ENCODE measurements at regions of chr17 and their contacts with region 1.

Region 1: DNA sequence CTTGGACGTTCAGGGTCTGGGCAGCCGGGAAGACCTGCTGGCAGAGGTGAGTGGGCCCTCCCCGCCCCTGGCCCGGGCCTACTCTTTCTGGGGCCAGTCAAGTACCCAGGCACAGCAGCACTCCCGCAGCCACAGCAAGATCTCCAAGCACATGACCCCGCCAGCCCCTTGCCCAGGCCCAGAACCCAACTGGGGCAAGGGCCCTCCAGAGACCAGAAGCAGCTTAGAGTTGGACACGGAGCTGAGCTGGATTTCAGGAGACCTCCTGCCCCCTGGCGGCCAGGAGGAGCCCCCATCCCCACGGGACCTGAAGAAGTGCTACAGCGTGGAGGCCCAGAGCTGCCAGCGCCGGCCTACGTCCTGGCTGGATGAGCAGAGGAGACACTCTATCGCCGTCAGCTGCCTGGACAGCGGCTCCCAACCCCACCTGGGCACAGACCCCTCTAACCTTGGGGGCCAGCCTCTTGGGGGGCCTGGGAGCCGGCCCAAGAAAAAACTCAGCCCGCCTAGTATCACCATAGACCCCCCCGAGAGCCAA is 8.6 kb upstream of the ABCC3 start:
- DNase-seq: peak; percentile 49 to 61 (median 53)
- H3K4me3 ChIP-seq: no peak overlapping the region
- H3K4me3 Mint-ChIP-seq: no peak overlapping the region
- H3K27ac ChIP-seq: no peak overlapping the region
- H3K27ac Mint-ChIP-seq: no peak overlapping the region
- H3K4me1 ChIP-seq: peaks cover 4% of the 10 kb centered on the region
- H3K4me1 Mint-ChIP-seq: peaks cover 0 to 4% (median under 1%) of the 10 kb centered on the region in 4 donors
- H3K27me3 ChIP-seq: peaks cover 14% of the 10 kb centered on the region
- H3K27me3 Mint-ChIP-seq: peaks cover 21 to 38% of the 10 kb centered on the region in 2 donors

Region 2: DNA sequence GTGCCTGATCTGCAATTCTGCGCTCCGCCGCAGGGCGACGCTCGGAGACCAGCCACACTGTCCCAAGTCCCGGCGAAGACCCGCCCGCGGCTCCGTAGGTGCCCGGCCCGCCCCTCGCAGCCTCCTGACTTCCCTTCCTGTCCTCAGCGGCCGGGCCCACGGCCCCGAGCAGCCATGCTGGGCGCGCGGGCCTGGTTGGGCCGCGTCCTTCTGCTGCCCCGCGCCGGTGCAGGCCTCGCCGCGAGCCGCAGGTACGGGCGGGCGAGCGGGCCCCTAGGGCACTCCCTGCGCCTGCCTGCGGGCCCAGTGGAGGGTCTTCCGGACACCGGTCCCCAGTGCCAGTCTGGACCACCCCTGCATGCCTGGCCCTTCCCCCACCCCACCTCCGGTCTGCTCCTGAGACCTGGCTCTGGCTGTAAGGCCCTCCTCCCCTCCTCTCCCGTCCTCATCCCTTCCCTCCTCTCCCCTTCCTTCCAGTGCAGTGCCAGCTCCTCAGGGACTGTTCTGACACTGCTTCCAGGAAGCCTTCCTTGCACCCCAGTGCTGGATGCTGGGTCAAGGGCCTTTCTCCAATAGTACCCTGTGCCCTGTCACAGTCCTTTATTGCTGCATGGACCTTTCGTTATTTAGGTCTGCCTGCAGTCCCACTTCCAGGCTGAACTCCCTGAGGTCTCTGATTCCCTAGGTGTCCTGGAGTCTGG is 78.9 kb before region 1 on chr17 and contains the start of gene SPATA20:
- CTCF ChIA-PET with region 1: interaction called, 22 read pairs
- POLR2A ChIA-PET with region 1: interaction called, 4 read pairs
- intact Hi-C with region 1: loop called (anchors 1 kb)
- DNase-seq: peak; percentile 83 to 85 (median 84)
- H3K4me3 ChIP-seq: peak within 1 kb of the TSS; percentile 56 to 63
- H3K4me3 Mint-ChIP-seq: peak within 1 kb of the TSS; percentile 48 to 86 (median 78)
- H3K27ac ChIP-seq: peak within 1 kb of the TSS; percentile 38
- H3K27ac Mint-ChIP-seq: peak within 1 kb of the TSS; percentile 32 to 87 (median 59)
- H3K4me1 ChIP-seq: peaks cover 19% of the 10 kb centered on the region
- H3K4me1 Mint-ChIP-seq: peaks cover 6 to 24% (median 17%) of the 10 kb centered on the region in 4 donors
- H3K27me3 ChIP-seq: no peaks in the 10 kb centered on the region
- H3K27me3 Mint-ChIP-seq: peaks cover 1 to 3% of the 10 kb centered on the region in 2 donors
- total RNA-seq, gene SPATA20: 13.3 to 14.1 TPM

Region 3: DNA sequence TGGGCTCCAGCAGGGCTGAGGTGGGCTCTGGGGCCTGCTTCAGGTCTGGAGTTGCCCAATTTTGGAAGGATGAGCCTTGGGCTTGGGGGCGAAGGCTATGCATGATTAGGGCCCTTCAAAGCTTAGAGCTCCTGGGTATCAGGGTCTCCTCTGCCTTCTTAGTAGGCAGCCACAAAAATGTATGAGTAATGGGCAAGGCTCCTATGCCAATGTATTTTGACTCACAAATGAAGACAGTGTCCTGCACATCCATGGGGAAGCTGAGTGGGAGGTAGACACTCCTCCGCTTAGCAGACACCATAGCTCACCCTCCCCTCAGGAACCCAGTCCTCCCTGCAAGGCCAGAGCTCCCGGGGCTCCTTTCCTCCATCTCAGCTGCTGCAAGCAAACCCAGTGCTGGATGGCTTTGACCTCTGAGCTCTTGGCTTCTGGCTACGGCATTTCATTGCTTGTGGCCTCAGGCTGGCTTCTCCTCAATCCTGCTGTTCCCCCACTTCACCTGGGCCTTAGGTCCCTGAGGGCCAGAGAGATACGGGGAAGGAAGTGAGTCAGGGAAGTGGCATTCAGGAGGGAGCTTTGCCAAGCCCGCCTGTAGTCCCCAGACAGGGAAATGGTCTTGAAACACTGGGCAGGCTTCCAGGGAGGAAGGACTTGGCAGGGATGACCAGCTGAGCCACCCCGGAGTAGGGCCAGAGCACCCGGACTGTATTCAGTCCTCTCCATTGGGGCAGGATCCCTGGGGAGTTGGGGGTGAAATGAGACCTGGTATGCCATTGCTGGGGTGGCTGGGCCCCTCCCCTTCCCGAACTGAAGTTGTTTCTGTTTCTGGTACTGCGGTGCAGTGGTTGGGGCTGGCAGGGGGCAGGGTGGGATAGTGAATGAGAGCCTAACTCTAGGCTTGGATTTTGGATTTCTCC is 13.0 kb after region 1 on chr17:
- CTCF ChIA-PET with region 1: interaction called, 18 read pairs
- POLR2A ChIA-PET with region 1: no interaction called
- intact Hi-C with region 1: no loop called
- DNase-seq: no peak
- H3K4me3 ChIP-seq: no peak overlapping the region
- H3K4me3 Mint-ChIP-seq: no peak overlapping the region
- H3K27ac ChIP-seq: no peak overlapping the region
- H3K27ac Mint-ChIP-seq: no peak overlapping the region
- H3K4me1 ChIP-seq: peaks cover 4% of the 10 kb centered on the region
- H3K4me1 Mint-ChIP-seq: peaks cover 0 to 7% (median 2%) of the 10 kb centered on the region in 4 donors
- H3K27me3 ChIP-seq: peaks cover 17% of the 10 kb centered on the region
- H3K27me3 Mint-ChIP-seq: peaks cover 24 to 25% of the 10 kb centered on the region in 2 donors

Region 4: DNA sequence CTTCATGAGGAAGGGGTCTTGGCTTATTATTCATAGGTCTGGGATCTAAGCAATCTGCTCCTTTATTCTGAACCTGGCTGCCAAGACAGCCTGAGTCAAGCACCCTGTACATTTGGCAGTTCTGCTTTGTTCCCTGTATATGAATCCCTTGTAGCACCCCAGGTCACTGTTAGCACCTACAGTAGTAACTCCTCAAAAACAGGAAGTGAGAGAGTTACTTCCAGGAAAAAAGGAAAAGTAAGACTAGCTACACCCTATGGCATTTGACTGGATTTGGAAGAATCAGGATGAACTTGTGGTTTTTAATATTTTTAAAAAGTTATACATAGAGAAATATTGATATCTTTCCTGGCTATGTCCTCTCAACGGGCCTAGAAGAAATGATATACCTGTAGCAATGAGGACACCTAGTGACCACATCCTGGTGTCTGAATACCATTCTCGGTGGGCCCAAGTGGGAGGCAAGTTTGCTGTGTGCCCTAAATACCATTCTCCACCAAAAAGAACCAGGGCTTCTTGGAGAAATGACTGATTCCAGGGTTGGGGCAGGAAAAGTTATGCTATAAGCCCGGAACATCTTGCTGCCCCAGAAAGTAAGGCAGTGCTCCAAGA is 71.7 kb after region 1 on chr17:
- CTCF ChIA-PET with region 1: interaction called, 4 read pairs
- POLR2A ChIA-PET with region 1: no interaction called
- intact Hi-C with region 1: loop called (anchors 1 kb)
- DNase-seq: no peak
- H3K4me3 ChIP-seq: no peak overlapping the region
- H3K4me3 Mint-ChIP-seq: no peak overlapping the region
- H3K27ac ChIP-seq: no peak overlapping the region
- H3K27ac Mint-ChIP-seq: peak overlapping the region in 6 of 7 donors; percentile 15 to 85 (median 42)
- H3K4me1 ChIP-seq: peaks cover 16% of the 10 kb centered on the region
- H3K4me1 Mint-ChIP-seq: peaks cover 12 to 34% (median 21%) of the 10 kb centered on the region in 4 donors
- H3K27me3 ChIP-seq: no peaks in the 10 kb centered on the region
- H3K27me3 Mint-ChIP-seq: no peaks in the 10 kb centered on the region

Region 5: DNA sequence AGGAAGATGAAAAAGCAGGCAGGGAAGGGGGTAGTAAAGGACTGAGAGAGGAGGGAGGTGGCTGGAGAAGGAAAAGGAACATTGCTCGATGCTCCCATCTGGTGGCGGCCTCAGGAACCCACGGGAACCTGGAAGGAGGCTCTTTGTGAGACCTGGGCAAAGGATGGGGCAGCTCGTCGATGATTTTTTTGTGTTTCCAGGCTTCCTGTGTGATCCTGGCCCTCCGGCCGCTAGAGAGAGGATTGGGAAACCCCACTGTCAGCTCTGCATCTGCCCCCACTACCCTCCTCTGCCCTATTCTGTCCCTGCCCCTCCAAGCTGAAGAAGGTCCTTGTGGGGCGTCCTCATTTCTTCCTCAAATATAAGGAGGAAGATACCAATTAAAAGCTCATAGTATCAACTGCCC is 215.8 kb after region 1 on chr17:
- CTCF ChIA-PET with region 1: interaction called, 13 read pairs
- POLR2A ChIA-PET with region 1: no interaction called
- intact Hi-C with region 1: no loop called
- DNase-seq: peak in 4 of 5 donors; percentile 42 to 46 (median 44)
- H3K4me3 ChIP-seq: no peak overlapping the region
- H3K4me3 Mint-ChIP-seq: no peak overlapping the region
- H3K27ac ChIP-seq: no peak overlapping the region
- H3K27ac Mint-ChIP-seq: peak overlapping the region in 2 of 7 donors; percentile 32 to 48
- H3K4me1 ChIP-seq: no peaks in the 10 kb centered on the region
- H3K4me1 Mint-ChIP-seq: peaks cover 0 to 5% (median 3%) of the 10 kb centered on the region in 4 donors
- H3K27me3 ChIP-seq: no peaks in the 10 kb centered on the region
- H3K27me3 Mint-ChIP-seq: peaks cover 2% of the 10 kb centered on the region in 2 donors

Region 6: DNA sequence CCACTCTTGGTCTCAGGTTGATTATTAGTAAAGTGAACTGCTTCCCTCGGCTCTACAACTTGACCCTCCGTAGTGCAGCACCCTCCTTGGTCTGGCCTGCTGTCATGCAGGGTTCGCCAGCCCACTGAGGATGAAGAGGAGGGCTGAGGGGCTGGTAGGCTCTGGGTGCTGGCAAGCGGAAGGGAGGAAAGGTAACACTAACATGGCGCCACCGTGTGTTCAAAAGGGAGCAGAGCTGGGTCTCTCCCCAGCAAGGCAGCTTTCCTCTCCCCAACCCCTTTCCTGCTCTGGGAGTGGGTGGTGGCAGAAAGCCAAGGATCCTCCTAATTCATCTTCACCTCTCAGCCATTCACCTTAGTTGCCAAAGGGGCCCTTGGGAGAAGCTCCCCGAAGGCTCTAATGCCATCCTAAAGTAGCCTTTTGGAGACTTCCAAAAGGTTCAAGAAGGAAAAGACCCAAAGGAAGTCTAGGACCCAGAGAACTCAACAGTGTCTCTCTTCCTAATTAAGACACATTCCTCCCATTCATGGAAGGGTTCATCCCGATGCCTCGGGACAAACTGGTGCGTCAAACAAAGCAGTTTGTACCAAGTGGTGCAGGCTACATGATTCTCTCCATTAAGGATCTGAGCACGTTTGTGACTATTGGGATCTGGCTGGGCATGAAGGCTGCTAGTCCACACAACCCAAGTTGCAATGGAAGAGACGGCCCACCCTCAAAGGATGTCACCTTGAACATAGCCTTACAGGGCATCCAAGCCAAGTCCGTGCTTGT is 330.8 kb after region 1 on chr17:
- CTCF ChIA-PET with region 1: interaction called, 3 read pairs
- POLR2A ChIA-PET with region 1: no interaction called
- intact Hi-C with region 1: loop called (anchors 5 kb)
- DNase-seq: peak; percentile 64 to 69 (median 65)
- H3K4me3 ChIP-seq: no peak overlapping the region
- H3K4me3 Mint-ChIP-seq: peak overlapping the region in 2 of 8 donors; percentile 40 to 67
- H3K27ac ChIP-seq: no peak overlapping the region
- H3K27ac Mint-ChIP-seq: peak overlapping the region in 6 of 7 donors; percentile 32 to 89 (median 76)
- H3K4me1 ChIP-seq: peaks cover 4% of the 10 kb centered on the region
- H3K4me1 Mint-ChIP-seq: peaks cover 1 to 5% (median 4%) of the 10 kb centered on the region in 4 donors
- H3K27me3 ChIP-seq: no peaks in the 10 kb centered on the region
- H3K27me3 Mint-ChIP-seq: peaks cover 0 to 2% of the 10 kb centered on the region in 2 donors